Activated T-helper 1 cell treated with anti-CD3 and anti-CD28 coated beads, Interleukin-12 subunit alpha, Interleukin-12 subunit beta, Interleukin-2, Interleukin-4 antibody, amounts not matched to agents 30 ng/mL and 10 ng/mL and 1 ng/mL, durations not matched to agents 14 hours and 24 hours and 36 hours (primary cell): ENCODE measurements at regions of chr17 and their contacts with region 1.

Region 1: GRCh38 chr17:59746849-59747445 is 39.5 kb downstream of the VMP1 start:
- DNase-seq: no peak
- H3K4me3 Mint-ChIP-seq: no peak overlapping the region
- H3K27ac Mint-ChIP-seq: no peak overlapping the region
- H3K4me1 Mint-ChIP-seq: peaks cover 14% of the 10 kb centered on the region
- H3K27me3 Mint-ChIP-seq: no peaks in the 10 kb centered on the region

Region 2: GRCh38 chr17:59859444-59860025 is 112.6 kb after region 1 on chr17:
- intact Hi-C with region 1: loop called (anchors 1 kb)
- DNase-seq: no peak
- H3K4me3 Mint-ChIP-seq: no peak overlapping the region
- H3K27ac Mint-ChIP-seq: peak overlapping the region; percentile 67
- H3K4me1 Mint-ChIP-seq: peaks cover 28% of the 10 kb centered on the region
- H3K27me3 Mint-ChIP-seq: no peaks in the 10 kb centered on the region